ENCODE measurements at regions of chr6 and their contacts with region 1.

Region 1: GRCh38 chr6:168574699-168575195 is 133.8 kb downstream of the SMOC2 start:
- DNase-seq: no peak
- H3K4me3 ChIP-seq: no peak overlapping the region
- CTCF ChIP-seq: no peak

Region 2: DNA sequence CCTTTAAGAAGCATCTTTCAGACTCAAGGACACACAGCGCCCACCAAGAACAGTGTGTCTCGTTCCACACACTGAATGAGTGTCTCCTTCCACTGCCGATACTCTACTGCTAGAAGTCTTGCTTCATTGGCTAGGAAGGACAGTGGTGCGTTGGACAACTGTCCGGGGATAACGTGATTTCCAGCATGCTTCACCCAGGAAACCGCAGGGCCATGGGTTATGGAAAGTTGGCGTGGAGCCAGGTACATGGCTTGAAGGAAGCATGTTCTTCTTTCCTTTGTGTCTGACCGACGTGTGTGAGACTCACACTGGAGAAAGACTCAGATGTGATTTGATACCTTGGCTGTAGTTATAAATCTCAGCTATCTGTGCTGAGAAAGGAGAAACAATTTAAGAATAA is 60.5 kb before region 1 on chr6:
- in situ Hi-C with region 1: loop called (anchors 5 kb)
- DNase-seq: no peak
- H3K4me3 ChIP-seq: no peak overlapping the region
- CTCF ChIP-seq: no peak

Region 3: DNA sequence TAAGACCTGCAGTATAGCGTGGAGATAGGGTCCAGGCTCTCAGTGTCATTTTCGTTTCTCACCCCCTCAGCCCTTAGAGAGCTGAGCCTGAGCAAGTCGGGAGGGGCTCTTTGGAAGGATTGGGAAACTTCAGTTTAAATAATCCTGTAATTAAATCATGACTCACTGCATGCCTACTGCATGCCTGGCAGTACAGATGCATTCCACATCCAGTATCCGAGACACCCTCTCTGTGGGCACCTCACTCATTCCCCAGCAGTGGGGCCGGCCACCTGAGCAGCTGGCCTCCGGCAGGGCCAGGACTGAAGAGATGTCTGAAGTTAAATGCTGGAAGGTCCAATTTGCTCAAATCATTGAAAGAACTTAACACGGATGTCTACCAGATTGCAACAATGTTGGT is 362.3 kb after region 1 on chr6:
- in situ Hi-C with region 1: no loop called
- DNase-seq: no peak
- H3K4me3 ChIP-seq: no peak overlapping the region
- CTCF ChIP-seq: no peak

Measured in astrocyte of the cerebellum (primary cell).